MCF 10A (cell line): ENCODE measurements at regions of chr14 and their contacts with region 1.

Region 1: GRCh38 chr14:49173765-49174373 is 412.3 kb downstream of the RPS29 start:
- DNase-seq: peak; percentile 75
- H3K4me3 Mint-ChIP-seq: no peak overlapping the region
- H3K27ac Mint-ChIP-seq: no peak overlapping the region
- H3K4me1 Mint-ChIP-seq: no peaks in the 10 kb centered on the region
- H3K27me3 Mint-ChIP-seq: peaks cover 31% of the 10 kb centered on the region
- CTCF ChIP-seq: peak; percentile 71

Region 2: DNA sequence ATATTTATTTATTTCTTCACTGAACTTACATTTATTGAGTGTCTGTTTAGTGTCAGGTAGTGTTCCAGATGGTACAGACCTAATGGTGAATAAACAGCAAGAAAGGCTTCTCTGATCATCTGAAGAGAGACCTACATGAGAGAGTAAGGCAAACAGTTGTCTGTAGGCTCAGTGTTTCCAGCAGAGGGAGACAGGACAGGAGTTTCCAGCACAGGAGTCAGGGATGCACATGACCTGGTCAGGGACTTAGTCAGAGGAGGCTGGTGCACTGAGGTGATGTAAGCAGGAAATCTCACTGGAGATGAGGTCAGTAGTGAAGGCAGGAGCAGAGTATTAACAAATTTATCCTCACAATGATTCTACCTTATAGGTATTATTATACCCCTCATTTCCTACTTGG is 1731.7 kb before region 1 on chr14:
- CTCF ChIA-PET with region 1: no interaction called
- POLR2A ChIA-PET with region 1: no interaction called
- intact Hi-C with region 1: loop called (anchors 2 kb)
- DNase-seq: peak; percentile 62
- H3K4me3 Mint-ChIP-seq: no peak overlapping the region
- H3K27ac Mint-ChIP-seq: no peak overlapping the region
- H3K4me1 Mint-ChIP-seq: no peaks in the 10 kb centered on the region
- H3K27me3 Mint-ChIP-seq: peaks cover 73% of the 10 kb centered on the region
- CTCF ChIP-seq: peak; percentile 32

Region 3: DNA sequence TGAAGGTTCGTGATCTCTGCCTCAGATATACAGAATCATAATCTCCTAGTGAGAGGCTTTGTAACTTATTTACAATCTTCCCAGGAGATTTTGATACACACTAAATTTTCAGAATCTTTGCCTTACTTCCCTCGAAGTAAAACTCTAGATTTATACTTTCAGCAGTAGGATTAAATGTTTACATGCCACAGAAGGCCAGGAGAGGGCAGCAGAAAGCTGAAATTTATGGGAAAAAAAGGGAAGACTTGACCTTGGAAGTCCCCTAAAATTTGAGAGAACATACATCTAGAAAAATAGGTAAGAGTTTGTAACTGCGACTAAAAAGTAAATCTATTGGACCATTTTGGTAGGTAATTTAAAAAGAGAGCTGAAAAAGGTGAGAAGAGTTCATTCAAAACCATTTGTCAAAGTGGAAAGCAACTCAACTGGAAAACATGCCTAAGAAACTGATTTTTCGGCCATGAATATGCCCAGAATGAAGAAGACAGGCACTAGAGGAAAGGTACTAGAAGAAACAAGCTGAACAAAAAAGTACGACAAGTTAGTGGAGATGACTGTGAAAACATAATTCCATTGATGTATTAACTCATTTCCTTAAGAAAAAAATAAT is 1256.4 kb before region 1 on chr14:
- CTCF ChIA-PET with region 1: interaction called, 7 read pairs
- POLR2A ChIA-PET with region 1: no interaction called
- intact Hi-C with region 1: loop called (anchors 1 kb)
- DNase-seq: peak; percentile 43
- H3K4me3 Mint-ChIP-seq: no peak overlapping the region
- H3K27ac Mint-ChIP-seq: no peak overlapping the region
- H3K4me1 Mint-ChIP-seq: no peaks in the 10 kb centered on the region
- H3K27me3 Mint-ChIP-seq: no peaks in the 10 kb centered on the region
- CTCF ChIP-seq: peak; percentile 70

Region 4: DNA sequence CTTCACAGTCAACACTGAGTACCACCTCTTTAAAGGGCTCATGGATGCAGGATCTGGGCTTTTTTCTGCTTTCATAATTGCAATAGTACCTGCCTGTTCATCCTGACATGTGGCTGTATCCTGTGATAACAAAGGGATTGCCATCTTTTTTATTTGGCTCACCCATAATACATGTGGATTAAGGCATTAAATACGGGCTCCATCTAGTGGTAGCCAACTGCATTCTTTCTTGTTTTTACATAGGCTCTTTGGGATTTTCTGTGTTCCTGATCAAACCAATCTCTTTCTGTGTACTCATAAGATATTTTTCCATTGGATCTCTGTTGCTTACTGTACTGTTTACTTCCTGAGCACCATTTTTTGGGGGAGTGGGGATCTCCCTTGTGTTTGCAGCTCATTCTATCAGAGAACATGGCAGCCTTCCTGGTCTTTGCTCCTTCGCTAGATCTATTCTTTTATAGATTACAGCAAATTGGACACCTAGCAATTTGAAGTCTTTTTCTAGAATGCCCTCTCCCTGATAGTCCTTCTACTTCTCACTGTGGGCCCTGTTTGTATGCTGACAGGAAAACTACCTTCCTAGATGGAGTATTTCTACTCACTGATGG is 775.1 kb before region 1 on chr14:
- CTCF ChIA-PET with region 1: no interaction called
- POLR2A ChIA-PET with region 1: no interaction called
- intact Hi-C with region 1: loop called (anchors 2 kb)
- DNase-seq: peak; percentile 51
- H3K4me3 Mint-ChIP-seq: no peak overlapping the region
- H3K27ac Mint-ChIP-seq: no peak overlapping the region
- H3K4me1 Mint-ChIP-seq: no peaks in the 10 kb centered on the region
- H3K27me3 Mint-ChIP-seq: no peaks in the 10 kb centered on the region
- CTCF ChIP-seq: peak; percentile 67

Region 5: DNA sequence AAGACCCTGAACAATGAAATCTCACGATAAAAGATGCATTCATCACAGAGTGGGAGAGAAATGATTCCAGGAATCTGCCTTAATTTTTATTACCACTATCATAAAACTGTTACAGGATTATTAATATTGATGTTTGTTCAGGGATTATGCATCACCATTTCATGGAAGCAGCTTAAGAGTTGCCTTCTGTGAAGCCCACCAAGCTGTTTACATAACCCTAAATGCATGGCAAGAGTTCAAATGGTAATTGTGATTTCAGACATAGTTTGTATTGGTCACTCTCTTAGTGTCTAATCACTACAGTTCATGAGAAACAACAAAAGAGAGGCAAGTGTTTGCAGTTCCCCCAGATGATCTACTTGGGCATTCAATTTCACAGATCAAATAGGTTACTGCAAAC is 115.4 kb before region 1 on chr14:
- CTCF ChIA-PET with region 1: no interaction called
- POLR2A ChIA-PET with region 1: no interaction called
- intact Hi-C with region 1: no loop called
- DNase-seq: no peak
- H3K4me3 Mint-ChIP-seq: no peak overlapping the region
- H3K27ac Mint-ChIP-seq: no peak overlapping the region
- H3K4me1 Mint-ChIP-seq: no peaks in the 10 kb centered on the region
- H3K27me3 Mint-ChIP-seq: no peaks in the 10 kb centered on the region
- CTCF ChIP-seq: no peak

Region 6: GRCh38 chr14:49196327-49196726 is 22.5 kb after region 1 on chr14:
- CTCF ChIA-PET with region 1: no interaction called
- POLR2A ChIA-PET with region 1: no interaction called
- intact Hi-C with region 1: no loop called
- DNase-seq: no peak
- H3K4me3 Mint-ChIP-seq: no peak overlapping the region
- H3K27ac Mint-ChIP-seq: no peak overlapping the region
- H3K4me1 Mint-ChIP-seq: no peaks in the 10 kb centered on the region
- H3K27me3 Mint-ChIP-seq: no peaks in the 10 kb centered on the region
- CTCF ChIP-seq: no peak

Region 7: DNA sequence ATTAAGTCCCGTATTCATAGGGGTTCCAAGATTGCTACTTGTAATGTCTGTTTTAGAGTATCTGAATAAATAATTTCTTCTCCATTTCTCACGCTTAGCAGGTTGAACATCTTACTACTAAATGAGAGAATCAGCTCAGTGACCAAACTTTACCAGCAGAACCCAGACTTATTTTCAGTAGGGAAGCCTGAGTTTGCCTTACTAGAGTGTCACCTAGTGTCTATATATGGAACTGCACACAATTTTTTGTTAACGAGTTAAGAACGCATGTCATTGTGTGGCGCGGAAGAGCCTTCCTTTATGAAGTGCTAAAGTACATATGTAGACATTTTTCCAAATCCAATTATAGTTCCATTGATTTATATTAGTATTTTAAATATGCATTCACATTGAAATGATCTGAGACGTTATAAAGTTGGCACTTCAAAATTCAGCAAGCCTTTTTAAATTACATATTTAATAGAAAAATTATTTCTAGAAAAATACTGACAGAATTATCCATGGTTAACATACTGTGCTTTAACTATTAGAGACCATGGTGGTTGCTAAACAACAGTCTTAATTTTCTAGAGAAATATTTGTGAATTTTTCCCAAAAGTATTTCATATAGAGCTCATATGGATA is 324.0 kb after region 1 on chr14:
- CTCF ChIA-PET with region 1: interaction called, 5 read pairs
- POLR2A ChIA-PET with region 1: no interaction called
- intact Hi-C with region 1: loop called (anchors 5 kb)
- DNase-seq: peak; percentile 68
- H3K4me3 Mint-ChIP-seq: no peak overlapping the region
- H3K27ac Mint-ChIP-seq: no peak overlapping the region
- H3K4me1 Mint-ChIP-seq: no peaks in the 10 kb centered on the region
- H3K27me3 Mint-ChIP-seq: no peaks in the 10 kb centered on the region
- CTCF ChIP-seq: peak; percentile 78

Region 8: GRCh38 chr14:49550286-49551184 is 376.7 kb after region 1 on chr14:
- CTCF ChIA-PET with region 1: interaction called, 3 read pairs
- POLR2A ChIA-PET with region 1: no interaction called
- intact Hi-C with region 1: loop called (anchors 10 kb)
- DNase-seq: no peak
- H3K4me3 Mint-ChIP-seq: no peak overlapping the region
- H3K27ac Mint-ChIP-seq: no peak overlapping the region
- H3K4me1 Mint-ChIP-seq: no peaks in the 10 kb centered on the region
- H3K27me3 Mint-ChIP-seq: no peaks in the 10 kb centered on the region
- CTCF ChIP-seq: peak; percentile 35